ENCODE measurements at regions of chr20 and their contacts with region 1.

Region 1: DNA sequence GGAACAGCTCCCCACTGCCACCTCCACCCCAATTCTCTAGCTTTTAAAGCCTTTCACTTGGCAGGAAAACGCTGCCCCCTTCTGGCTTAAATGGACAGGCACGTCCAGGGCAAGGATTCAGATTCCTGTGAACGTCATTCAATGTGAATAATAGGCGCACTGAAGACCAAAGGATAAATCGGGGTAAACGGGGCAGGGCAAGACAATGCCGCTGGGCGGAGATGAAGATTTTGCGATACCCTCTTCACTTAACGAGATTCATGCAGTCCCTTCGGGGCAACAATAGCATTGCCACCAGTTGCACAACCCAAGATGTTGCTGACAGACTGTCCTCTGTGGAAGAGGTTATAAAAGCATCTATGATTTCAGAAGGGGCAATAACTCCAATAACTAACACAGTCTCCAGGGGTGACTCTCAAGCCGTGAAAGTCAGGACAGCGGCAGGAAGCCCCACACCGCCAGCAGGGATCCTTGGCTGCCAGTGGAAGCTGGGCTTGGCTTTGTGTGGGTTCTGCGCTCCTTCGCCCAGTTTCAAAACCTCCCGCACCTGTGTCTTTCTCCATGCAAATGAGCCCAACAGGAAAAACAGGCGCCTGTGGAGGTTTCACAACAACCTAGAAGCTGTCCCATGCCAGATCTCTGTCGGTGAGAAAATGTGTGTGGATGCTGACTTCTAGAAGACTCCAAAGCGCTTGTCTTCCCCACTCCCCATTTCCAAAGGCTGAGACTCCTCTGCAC is 291.8 kb downstream of the BMP7 start:
- DNase-seq: no peak
- ATAC-seq: no peak
- H3K4me3 ChIP-seq: no peak overlapping the region
- H3K27ac ChIP-seq: no peak overlapping the region
- H3K4me1 ChIP-seq: no peaks in the 10 kb centered on the region
- H3K27me3 ChIP-seq: peaks cover 24% of the 10 kb centered on the region
- CTCF ChIP-seq: peak; percentile 41

Region 2: GRCh38 chr20:56554869-56555268 is 419.8 kb before region 1 on chr20:
- intact Hi-C with region 1: loop called (anchors 10 kb)
- DNase-seq: no peak
- ATAC-seq: peak; percentile 64 to 79
- H3K4me3 ChIP-seq: no peak overlapping the region
- H3K27ac ChIP-seq: no peak overlapping the region
- H3K4me1 ChIP-seq: peaks cover 6% of the 10 kb centered on the region
- H3K27me3 ChIP-seq: no peaks in the 10 kb centered on the region
- CTCF ChIP-seq: no peak

Measured in lower lobe of right lung (tissue), 2 donors.